ENCODE measurements at regions of chr11 and their contacts with region 1.

Region 1: DNA sequence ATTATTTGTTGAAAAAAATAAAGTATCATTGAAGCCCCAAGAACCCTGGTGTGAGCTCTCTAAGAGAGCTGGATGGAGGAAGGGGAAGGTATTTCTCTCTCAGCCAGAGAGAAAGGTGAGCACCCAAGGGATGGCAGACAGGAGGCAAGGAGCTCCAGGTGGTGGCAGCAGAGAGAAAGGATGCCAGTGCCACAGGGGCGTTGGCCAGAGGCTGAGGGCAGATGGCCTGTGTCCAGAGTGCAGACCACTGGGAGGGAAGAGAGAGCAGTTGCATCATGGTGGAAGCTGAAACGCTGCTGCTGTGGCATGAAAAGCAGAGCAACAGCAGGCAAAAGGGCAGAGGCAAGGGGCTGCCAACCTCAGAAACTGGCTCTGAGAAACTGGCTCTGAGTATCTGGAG is 8.5 kb downstream of the SPON1 start:
- DNase-seq: peak; percentile 73 to 75
- H3K4me3 ChIP-seq: no peak overlapping the region
- H3K4me3 Mint-ChIP-seq: no peak overlapping the region
- H3K27ac Mint-ChIP-seq: peak overlapping the region; percentile 63
- H3K4me1 ChIP-seq: peaks cover 61% of the 10 kb centered on the region
- H3K4me1 Mint-ChIP-seq: peaks cover 53% of the 10 kb centered on the region
- H3K27me3 ChIP-seq: no peaks in the 10 kb centered on the region
- H3K27me3 Mint-ChIP-seq: no peaks in the 10 kb centered on the region
- CTCF ChIP-seq: peak; percentile 36 to 70

Region 2: DNA sequence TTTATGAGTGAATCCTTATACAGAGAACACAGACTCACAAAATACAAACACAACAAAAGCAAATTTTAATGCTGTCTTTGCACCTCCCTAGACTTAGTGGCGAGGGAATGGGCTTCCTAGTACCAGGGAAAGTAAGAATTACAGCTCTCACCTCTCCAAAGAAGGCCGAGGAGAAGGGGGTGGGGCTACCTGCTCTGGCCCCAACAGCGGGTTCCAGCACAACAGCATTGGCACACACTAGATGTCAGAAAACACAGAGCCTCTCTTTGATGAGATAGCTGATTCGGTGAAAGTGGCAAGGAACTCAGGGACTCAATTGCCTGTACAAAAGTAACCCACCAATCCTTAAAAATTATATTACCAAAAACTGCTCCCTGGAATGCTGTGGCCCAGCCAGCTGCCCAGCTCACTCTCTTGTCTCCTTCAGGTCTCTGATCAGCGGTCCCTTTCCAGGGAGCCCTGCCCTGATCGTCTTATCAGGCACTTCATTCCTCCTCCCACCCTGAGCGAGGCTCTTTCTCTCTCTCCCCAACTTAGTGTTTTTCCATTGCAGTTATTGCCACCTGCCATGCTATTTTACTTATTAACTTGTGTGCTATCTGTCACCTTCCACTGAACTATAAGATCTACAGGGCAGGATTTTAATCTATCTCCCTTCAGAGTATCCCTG is 22.2 kb after region 1 on chr11:
- CTCF ChIA-PET with region 1: interaction called, 3 read pairs
- POLR2A ChIA-PET with region 1: no interaction called
- intact Hi-C with region 1: loop called (anchors 2 kb)
- DNase-seq: peak; percentile 45 to 71
- H3K4me3 ChIP-seq: no peak overlapping the region
- H3K4me3 Mint-ChIP-seq: peak overlapping the region; percentile 62
- H3K27ac Mint-ChIP-seq: peak overlapping the region; percentile 79
- H3K4me1 ChIP-seq: peaks cover 46% of the 10 kb centered on the region
- H3K4me1 Mint-ChIP-seq: peaks cover 29% of the 10 kb centered on the region
- H3K27me3 ChIP-seq: no peaks in the 10 kb centered on the region
- H3K27me3 Mint-ChIP-seq: no peaks in the 10 kb centered on the region
- CTCF ChIP-seq: no peak

Region 3: DNA sequence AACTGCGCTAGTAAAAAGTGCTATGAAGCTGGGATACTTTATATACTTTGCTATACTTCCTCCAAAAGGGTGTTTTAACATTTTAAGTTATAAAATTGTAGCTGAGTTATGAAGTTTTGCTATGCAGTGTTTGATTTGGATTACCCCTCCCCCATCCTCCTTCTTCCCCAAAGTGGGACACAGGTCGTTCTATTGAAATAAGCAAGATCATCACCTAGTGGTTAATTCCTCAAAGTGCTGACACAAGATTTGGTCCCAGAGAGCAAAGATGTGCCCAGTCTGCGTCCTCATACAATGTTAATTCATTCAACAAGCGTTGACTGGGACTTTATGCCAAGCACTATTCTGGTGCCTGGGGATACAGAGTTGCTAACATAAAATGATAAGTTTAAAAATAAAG is 70.1 kb after region 1 on chr11:
- CTCF ChIA-PET with region 1: no interaction called
- POLR2A ChIA-PET with region 1: no interaction called
- intact Hi-C with region 1: loop called (anchors 1 kb)
- DNase-seq: peak in 1 of 2 experiments; percentile 34
- H3K4me3 ChIP-seq: no peak overlapping the region
- H3K4me3 Mint-ChIP-seq: no peak overlapping the region
- H3K27ac Mint-ChIP-seq: no peak overlapping the region
- H3K4me1 ChIP-seq: peaks cover 15% of the 10 kb centered on the region
- H3K4me1 Mint-ChIP-seq: no peaks in the 10 kb centered on the region
- H3K27me3 ChIP-seq: no peaks in the 10 kb centered on the region
- H3K27me3 Mint-ChIP-seq: no peaks in the 10 kb centered on the region
- CTCF ChIP-seq: peak; percentile 43 to 67